ENCODE measurements at regions of chr12 and their contacts with region 1.

Region 1: DNA sequence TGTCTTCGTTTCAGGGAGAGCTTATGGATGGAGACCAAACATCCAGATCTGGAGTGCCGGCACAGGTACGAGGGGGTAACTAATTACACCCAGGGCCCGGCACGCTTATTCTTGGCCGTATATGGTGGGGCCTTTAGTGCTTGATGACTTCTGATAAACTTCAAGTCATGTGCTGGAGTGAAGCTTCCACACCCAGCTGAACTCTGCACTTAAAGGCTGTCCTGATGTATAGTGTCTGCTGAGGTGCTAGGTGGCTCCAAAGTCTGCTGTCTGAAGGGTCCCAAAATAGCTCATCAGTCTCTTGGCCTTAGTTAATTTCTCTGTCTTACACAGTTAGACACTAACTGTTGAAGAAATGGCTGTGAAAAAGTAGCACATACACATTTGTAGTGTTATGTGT is 17.9 kb downstream of the RNF34 start:
- DNase-seq: no peak
- H3K4me3 ChIP-seq: no peak overlapping the region
- H3K27ac ChIP-seq: no peak overlapping the region
- H3K4me1 ChIP-seq: no peaks in the 10 kb centered on the region
- H3K27me3 ChIP-seq: no peaks in the 10 kb centered on the region
- CTCF ChIP-seq: no peak
- EP300 ChIP-seq: no peak
- POLR2A ChIP-seq: no peak
- RAD21 ChIP-seq: no peak

Region 2: GRCh38 chr12:121314431-121314830 is 103.4 kb before region 1 on chr12:
- CTCF ChIA-PET with region 1: no interaction called
- POLR2A ChIA-PET with region 1: no interaction called
- DNase-seq: no peak
- H3K4me3 ChIP-seq: no peak overlapping the region
- H3K27ac ChIP-seq: no peak overlapping the region
- H3K4me1 ChIP-seq: no peaks in the 10 kb centered on the region
- H3K27me3 ChIP-seq: no peaks in the 10 kb centered on the region
- CTCF ChIP-seq: no peak
- EP300 ChIP-seq: no peak
- POLR2A ChIP-seq: no peak
- RAD21 ChIP-seq: no peak

Region 3: DNA sequence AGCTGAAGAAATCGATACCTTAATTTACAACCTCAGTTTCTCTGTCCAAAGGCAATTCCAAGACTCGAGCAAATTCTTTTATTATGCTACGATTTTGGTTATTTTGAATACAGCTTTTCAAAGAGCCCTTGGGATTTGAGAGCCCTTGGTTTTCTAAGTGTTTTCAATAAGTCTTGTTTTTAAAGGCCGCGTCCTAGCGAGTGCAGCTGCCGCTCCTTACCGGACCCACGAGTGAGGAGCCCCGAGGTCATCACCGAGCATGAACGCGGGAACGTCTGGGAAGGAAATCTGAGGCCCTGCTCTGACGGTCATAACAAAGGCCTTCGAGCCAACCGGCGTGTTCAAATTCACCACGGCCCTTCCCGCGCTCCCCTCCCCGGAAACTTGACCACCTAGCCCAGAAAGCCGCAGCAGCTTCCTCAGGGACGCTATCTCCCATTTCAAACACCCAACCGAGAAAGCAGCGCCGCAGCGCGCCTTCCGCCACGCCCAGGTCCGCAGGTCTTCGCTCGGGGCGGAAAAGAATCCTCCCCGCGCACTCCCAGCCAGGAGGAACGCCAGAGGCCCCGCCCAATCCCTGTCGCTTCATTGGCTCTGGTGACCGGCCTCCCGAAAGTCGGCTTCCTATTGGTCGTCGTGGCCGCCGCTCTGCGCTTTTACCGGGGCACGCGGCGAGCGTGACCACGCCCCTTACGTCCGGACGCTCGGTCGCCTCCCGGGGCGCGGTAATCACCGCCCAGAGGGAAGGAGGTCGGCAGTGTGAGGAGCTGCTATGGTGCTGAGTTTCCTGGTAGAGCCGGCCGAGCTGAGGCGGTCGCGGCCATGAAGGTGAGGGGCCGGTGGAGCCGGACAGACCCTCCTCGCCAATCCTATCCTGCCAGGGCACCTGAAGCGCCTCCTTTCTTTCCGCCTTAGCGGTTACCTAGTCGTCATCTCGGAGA is 18.2 kb before region 1 on chr12 and contains the start of gene RNF34:
- CTCF ChIA-PET with region 1: interaction called, 3 read pairs
- POLR2A ChIA-PET with region 1: interaction called, 22 read pairs
- DNase-seq: peak; percentile 94 to 98
- H3K4me3 ChIP-seq: peak within 1 kb of the TSS; percentile 76 to 87 (median 86)
- H3K27ac ChIP-seq: peak within 1 kb of the TSS; percentile 83
- H3K4me1 ChIP-seq: peaks cover 0 to 4% (median under 1%) of the 10 kb centered on the region in 4 experiments; a peak in 1 of 7 replicates
- H3K27me3 ChIP-seq: no peaks in the 10 kb centered on the region
- CTCF ChIP-seq: no peak
- EP300 ChIP-seq: no peak
- POLR2A ChIP-seq: peak; percentile 87 to 92; a peak in 2 of 3 replicates
- RAD21 ChIP-seq: no peak
- total RNA-seq, gene RNF34: 56.2 and 57.6 TPM in 2 replicates